ENCODE measurements at regions of chr12 and their contacts with region 1.

Region 1: GRCh38 chr12:128069359-128069997 is 197.5 kb upstream of the TMEM132C start:
- DNase-seq: no peak
- H3K4me3 Mint-ChIP-seq: no peak overlapping the region
- H3K27ac Mint-ChIP-seq: no peak overlapping the region
- H3K4me1 Mint-ChIP-seq: no peaks in the 10 kb centered on the region
- H3K27me3 Mint-ChIP-seq: no peaks in the 10 kb centered on the region

Region 2: GRCh38 chr12:127108360-127109215 is 960.9 kb before region 1 on chr12:
- intact Hi-C with region 1: loop called (anchors 2 kb)
- DNase-seq: peak; percentile 16
- H3K4me3 Mint-ChIP-seq: no peak overlapping the region
- H3K27ac Mint-ChIP-seq: no peak overlapping the region
- H3K4me1 Mint-ChIP-seq: peaks cover 6% of the 10 kb centered on the region
- H3K27me3 Mint-ChIP-seq: peaks cover 6% of the 10 kb centered on the region

Region 3: DNA sequence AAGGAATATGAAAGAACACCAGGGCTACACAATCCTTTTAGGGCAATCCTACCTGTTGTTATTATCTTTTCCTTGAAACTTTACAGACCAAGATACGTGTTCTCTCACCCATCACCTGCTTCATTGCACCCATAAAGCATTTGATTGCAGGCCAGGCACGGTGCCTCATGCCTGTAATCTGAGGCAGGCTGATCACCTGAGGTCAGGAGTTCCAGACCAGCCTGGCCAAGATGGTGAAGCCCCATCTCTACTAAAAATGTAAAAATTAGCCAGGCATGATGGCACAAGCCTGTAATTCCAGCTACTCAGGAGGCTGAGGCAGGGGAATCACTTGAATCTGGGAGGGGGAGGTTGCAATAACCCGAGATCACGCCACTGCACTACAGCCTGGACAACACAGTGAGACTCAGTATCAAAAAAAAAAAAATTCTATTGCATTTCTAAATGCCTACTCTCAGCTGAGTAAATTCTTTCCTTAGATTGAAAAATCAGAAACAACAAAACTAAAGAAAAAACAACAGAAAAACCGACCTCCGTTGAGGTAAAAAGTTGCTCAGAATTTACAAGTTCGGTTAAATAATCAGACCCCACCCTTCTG is 13.8 kb after region 1 on chr12:
- intact Hi-C with region 1: no loop called
- DNase-seq: no peak
- H3K4me3 Mint-ChIP-seq: no peak overlapping the region
- H3K27ac Mint-ChIP-seq: no peak overlapping the region
- H3K4me1 Mint-ChIP-seq: no peaks in the 10 kb centered on the region
- H3K27me3 Mint-ChIP-seq: no peaks in the 10 kb centered on the region

Region 4: DNA sequence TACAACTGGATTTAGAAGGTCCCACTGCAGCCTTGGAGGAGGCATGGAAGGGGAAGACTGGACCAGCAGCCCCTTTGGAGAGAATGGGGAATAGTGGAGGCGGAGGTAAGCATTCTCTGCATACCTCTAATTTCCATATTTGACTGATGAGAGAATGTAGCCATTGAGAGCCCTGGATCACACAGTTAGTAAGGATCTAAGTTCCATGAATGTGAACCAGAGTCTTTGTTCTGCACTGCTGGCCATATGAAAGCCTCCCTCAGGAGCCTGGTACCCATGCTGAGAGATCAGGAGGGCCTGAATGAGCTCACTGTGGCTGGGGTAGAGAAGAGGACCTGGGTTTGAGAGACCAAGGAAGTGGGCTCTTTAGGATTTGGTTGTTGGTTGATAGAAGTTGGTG is 389.6 kb after region 1 on chr12:
- intact Hi-C with region 1: no loop called
- DNase-seq: no peak
- H3K4me3 Mint-ChIP-seq: no peak overlapping the region
- H3K27ac Mint-ChIP-seq: no peak overlapping the region
- H3K4me1 Mint-ChIP-seq: no peaks in the 10 kb centered on the region
- H3K27me3 Mint-ChIP-seq: no peaks in the 10 kb centered on the region

Region 5: GRCh38 chr12:128519426-128519825 is 449.9 kb after region 1 on chr12:
- intact Hi-C with region 1: no loop called
- DNase-seq: no peak
- H3K4me3 Mint-ChIP-seq: no peak overlapping the region
- H3K27ac Mint-ChIP-seq: no peak overlapping the region
- H3K4me1 Mint-ChIP-seq: no peaks in the 10 kb centered on the region
- H3K27me3 Mint-ChIP-seq: no peaks in the 10 kb centered on the region